CD4-positive, alpha-beta memory T cell (primary cell): ENCODE measurements at regions of chr1 and their contacts with region 1.

Region 1: GRCh38 chr1:30801771-30802198 is 44.2 kb upstream of the LAPTM5 start:
- DNase-seq: peak; percentile 64 to 77 (median 66)
- H3K4me3 ChIP-seq: no peak overlapping the region
- H3K4me3 Mint-ChIP-seq: peak overlapping the region in 2 of 8 donors; percentile 25 to 27
- H3K27ac ChIP-seq: no peak overlapping the region
- H3K27ac Mint-ChIP-seq: peak overlapping the region in 2 of 7 donors; percentile 36 to 80
- H3K4me1 ChIP-seq: peaks cover 5% of the 10 kb centered on the region
- H3K4me1 Mint-ChIP-seq: peaks cover 0 to 5% (median 4%) of the 10 kb centered on the region in 4 donors
- H3K27me3 ChIP-seq: peaks cover 3% of the 10 kb centered on the region
- H3K27me3 Mint-ChIP-seq: peaks cover 12 to 26% of the 10 kb centered on the region in 2 donors

Region 2: DNA sequence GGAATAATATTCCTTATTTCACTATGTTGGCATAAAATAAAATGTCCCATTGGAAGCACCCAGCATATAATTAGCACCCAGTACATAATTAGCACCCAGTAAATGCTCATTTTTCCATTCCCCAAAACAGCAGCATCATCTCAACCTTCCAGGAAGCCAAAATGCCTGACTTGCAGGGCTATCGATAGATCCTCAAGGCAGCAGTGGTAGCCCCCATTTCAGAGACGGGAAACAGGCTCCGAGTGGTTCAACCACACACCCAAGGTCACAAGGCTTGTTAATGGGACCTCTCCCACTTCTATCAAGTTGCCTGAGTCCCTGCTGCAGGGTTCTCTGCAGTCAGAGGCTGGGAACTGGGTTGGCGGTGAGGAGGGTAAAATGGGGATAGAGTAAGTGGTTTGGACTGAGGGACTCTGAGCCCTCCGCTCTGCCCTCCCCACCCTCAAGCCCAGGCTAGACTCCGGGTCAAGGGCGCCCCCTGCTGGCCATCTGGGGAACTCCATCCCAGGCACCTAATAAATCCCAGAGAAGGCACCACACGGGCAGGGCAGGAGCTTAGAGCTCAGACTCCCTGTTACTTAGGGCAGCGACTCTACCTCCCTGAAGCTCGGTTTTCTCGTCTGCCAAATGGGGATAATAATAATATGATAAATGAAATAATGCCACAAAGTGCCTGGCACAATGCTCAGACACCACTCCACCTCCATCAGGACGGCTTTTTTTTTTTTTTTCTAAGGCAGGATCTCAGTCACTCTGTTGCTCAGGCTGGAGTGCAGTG is 22.3 kb before region 1 on chr1:
- CTCF ChIA-PET with region 1: interaction called, 17 read pairs
- POLR2A ChIA-PET with region 1: interaction called, 4 read pairs
- intact Hi-C with region 1: no loop called
- DNase-seq: peak; percentile 82 to 91 (median 85)
- H3K4me3 ChIP-seq: no peak overlapping the region
- H3K4me3 Mint-ChIP-seq: peak overlapping the region in 3 of 8 donors; percentile 11 to 35 (median 35)
- H3K27ac ChIP-seq: no peak overlapping the region
- H3K27ac Mint-ChIP-seq: peak overlapping the region in 4 of 7 donors; percentile 39 to 76 (median 64)
- H3K4me1 ChIP-seq: peaks cover 21% of the 10 kb centered on the region
- H3K4me1 Mint-ChIP-seq: peaks cover 5 to 11% (median 8%) of the 10 kb centered on the region in 4 donors
- H3K27me3 ChIP-seq: no peaks in the 10 kb centered on the region
- H3K27me3 Mint-ChIP-seq: peaks cover 0 to 2% of the 10 kb centered on the region in 2 donors

Region 3: DNA sequence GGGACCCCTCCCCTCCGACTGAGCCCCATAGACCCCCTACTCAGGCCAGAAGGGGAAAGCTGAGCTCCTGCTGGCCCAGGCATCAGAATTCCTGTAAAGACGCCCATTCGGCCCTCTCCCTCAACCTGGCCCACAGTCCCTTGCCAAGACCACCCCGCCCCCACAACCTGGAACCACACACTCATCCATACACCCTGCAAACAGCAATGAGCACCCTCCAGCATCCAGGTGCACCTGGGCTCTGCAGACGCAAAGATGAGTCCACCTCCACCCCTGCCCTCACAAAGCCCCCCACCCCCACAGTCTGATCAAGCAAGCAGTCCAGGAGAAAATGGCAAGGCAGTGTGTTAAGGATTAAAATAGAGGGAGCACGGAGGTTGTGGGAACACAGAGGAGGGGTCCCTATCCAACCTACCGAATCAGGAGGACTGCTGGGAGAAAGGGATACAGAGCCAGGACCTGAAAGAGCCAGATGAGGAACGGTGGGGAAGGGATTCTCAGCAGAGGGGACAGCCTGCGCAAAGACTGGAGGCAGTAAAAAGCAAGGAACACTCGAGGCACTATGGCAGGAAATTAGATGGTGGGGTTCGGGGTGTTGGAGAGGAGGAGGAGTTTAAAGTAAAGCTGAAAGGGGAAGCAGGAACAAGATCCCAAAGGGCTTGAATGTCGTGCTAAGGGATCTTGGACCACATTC is 23.1 kb after region 1 on chr1:
- CTCF ChIA-PET with region 1: interaction called, 19 read pairs
- POLR2A ChIA-PET with region 1: no interaction called
- intact Hi-C with region 1: no loop called
- DNase-seq: no peak
- H3K4me3 ChIP-seq: no peak overlapping the region
- H3K4me3 Mint-ChIP-seq: peak overlapping the region in 7 of 8 donors; percentile 25 to 89 (median 44)
- H3K27ac ChIP-seq: no peak overlapping the region
- H3K27ac Mint-ChIP-seq: peak overlapping the region in 2 of 7 donors; percentile 8 to 66
- H3K4me1 ChIP-seq: peaks cover 25% of the 10 kb centered on the region
- H3K4me1 Mint-ChIP-seq: peaks cover 10 to 32% (median 15%) of the 10 kb centered on the region in 4 donors
- H3K27me3 ChIP-seq: peaks cover 17% of the 10 kb centered on the region
- H3K27me3 Mint-ChIP-seq: peaks cover 33 to 54% of the 10 kb centered on the region in 2 donors

Region 4: GRCh38 chr1:30911046-30911954 is 109.5 kb after region 1 on chr1:
- CTCF ChIA-PET with region 1: interaction called, 109 read pairs
- POLR2A ChIA-PET with region 1: no interaction called
- intact Hi-C with region 1: loop called (anchors 1 kb)
- DNase-seq: peak in 3 of 5 donors; percentile 27 to 32 (median 32)
- H3K4me3 ChIP-seq: no peak overlapping the region
- H3K4me3 Mint-ChIP-seq: peak overlapping the region in 3 of 8 donors; percentile 14 to 36 (median 21)
- H3K27ac ChIP-seq: no peak overlapping the region
- H3K27ac Mint-ChIP-seq: no peak overlapping the region
- H3K4me1 ChIP-seq: peaks cover 15% of the 10 kb centered on the region
- H3K4me1 Mint-ChIP-seq: peaks cover 9 to 19% (median 14%) of the 10 kb centered on the region in 4 donors
- H3K27me3 ChIP-seq: peaks cover 17% of the 10 kb centered on the region
- H3K27me3 Mint-ChIP-seq: peaks cover 9 to 18% of the 10 kb centered on the region in 2 donors

Region 5: DNA sequence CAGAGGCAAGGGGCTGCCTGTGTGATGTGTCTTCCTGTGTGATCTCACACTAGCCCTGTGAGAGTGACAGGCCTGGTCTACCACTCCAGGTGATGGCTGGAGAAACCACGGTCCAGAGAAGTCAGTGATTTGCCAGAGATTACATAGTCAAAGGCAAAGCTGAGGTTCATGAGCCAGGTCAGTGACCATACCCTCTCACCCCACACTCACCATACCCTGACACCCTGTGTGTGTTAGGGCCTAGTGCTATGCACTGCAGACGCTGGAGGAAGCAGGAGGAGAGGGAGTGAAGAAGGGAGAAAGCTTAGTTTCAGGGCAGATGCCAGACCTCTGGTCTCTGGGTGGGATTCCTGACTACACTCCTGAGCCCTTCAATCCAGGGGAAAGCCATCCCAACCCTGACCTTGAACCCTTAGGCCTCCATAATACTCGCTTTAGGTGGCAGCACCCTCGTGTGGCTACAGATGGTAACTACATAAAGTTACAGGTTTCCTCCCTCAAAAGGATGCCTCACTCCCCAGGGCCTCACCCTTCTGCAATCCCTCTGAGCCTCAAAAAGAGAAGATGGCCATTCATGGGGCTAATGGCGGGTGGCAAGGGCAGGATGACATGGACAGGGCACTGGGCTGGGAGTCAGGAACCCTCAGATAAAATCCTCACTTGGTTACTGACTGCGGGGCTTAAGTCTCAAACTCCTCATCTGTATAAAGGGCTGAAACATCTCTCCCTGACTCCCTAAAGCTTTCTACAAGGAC is 127.5 kb after region 1 on chr1:
- CTCF ChIA-PET with region 1: interaction called, 90 read pairs
- POLR2A ChIA-PET with region 1: no interaction called
- intact Hi-C with region 1: no loop called
- DNase-seq: peak in 4 of 5 donors; percentile 31 to 38 (median 36)
- H3K4me3 ChIP-seq: no peak overlapping the region
- H3K4me3 Mint-ChIP-seq: peak overlapping the region in 1 of 8 donors; percentile 44
- H3K27ac ChIP-seq: no peak overlapping the region
- H3K27ac Mint-ChIP-seq: peak overlapping the region in 3 of 7 donors; percentile 1 to 86 (median 82)
- H3K4me1 ChIP-seq: no peaks in the 10 kb centered on the region
- H3K4me1 Mint-ChIP-seq: peaks cover 0 to 1% (median 0%) of the 10 kb centered on the region in 4 donors
- H3K27me3 ChIP-seq: no peaks in the 10 kb centered on the region
- H3K27me3 Mint-ChIP-seq: peaks cover 0 to 2% of the 10 kb centered on the region in 2 donors

Region 6: DNA sequence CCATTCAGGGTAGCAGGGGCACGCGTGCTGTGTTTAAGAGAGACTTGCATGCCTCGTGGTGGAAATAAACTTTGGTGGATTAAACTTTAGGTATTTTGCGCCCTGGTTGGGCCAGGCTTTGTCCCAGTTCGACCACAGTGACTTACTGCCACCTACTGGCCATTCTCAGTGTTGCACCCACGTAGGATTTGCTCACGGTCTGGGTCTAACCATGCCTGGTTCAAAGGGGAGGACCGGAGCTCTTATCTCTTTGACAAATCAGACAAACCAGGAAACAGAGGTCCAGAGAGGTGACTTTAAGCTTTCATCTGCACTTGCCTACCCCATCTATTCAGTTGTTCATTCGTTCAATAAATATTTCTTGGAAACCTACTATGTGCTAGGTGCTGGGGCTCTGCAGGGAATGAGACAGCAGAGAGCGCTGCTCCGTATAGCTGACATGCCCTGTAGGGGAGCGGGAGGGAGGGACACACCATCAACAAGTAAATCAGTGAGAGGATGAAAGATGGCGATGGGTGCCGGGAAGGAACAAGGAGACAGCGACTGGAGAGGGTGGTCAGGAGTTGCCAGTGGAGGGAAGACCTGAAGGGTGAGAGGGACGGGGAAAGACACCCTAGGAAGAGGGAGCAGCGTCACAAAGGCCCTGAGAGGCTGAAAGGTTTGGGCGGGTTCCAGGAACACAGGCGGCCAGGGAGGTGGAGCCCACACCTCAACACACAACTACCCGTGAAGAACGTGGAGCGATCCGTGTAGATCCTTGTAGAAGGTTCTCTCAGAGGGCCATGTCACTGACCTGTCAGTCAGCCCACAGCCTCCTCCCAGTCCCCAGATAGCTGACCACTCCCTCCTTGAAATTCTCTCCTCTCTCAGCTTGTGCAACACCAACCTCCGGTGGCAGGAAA is 747.4 kb after region 1 on chr1:
- CTCF ChIA-PET with region 1: interaction called, 4 read pairs
- POLR2A ChIA-PET with region 1: no interaction called
- intact Hi-C with region 1: loop called (anchors 5 kb)
- DNase-seq: peak; percentile 79 to 86 (median 84)
- H3K4me3 ChIP-seq: no peak overlapping the region
- H3K4me3 Mint-ChIP-seq: peak overlapping the region; percentile 37 to 75 (median 54)
- H3K27ac ChIP-seq: no peak overlapping the region
- H3K27ac Mint-ChIP-seq: no peak overlapping the region
- H3K4me1 ChIP-seq: peaks cover 11% of the 10 kb centered on the region
- H3K4me1 Mint-ChIP-seq: peaks cover 6 to 9% (median 8%) of the 10 kb centered on the region in 4 donors
- H3K27me3 ChIP-seq: no peaks in the 10 kb centered on the region
- H3K27me3 Mint-ChIP-seq: peaks cover 2 to 4% of the 10 kb centered on the region in 2 donors